ENCODE measurements at regions of chr1 and their contacts with region 1.

Region 1: DNA sequence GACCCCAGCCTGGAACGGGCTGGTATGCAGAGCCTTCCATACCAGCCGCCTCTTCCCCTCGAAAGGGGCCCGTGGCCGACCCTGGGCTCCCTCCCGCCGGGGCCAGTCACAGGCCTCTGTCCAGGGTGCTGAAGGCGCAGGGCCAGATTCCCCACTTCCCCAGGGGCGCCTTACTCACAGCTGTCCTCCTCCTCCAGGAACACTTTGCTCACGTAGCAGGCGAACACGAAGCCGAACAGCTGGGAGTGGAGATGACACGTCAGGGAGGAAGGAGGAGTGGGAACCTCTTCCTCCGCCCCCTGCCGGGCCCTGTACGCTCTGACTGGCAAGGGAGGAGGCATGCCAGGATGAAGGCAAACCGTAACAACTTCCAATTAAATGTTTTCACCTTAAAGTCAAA is 57.3 kb downstream of the NKAIN1 start:
- DNase-seq: peak; percentile 54
- ATAC-seq: peak; percentile 69
- H3K4me3 Mint-ChIP-seq: no peak overlapping the region
- H3K27ac Mint-ChIP-seq: no peak overlapping the region
- H3K4me1 Mint-ChIP-seq: peaks cover 7% of the 10 kb centered on the region
- H3K27me3 Mint-ChIP-seq: peaks cover 30% of the 10 kb centered on the region
- CTCF ChIP-seq: no peak

Region 2: GRCh38 chr1:30868833-30869435 is 313.4 kb before region 1 on chr1:
- CTCF ChIA-PET with region 1: no interaction called
- POLR2A ChIA-PET with region 1: no interaction called
- intact Hi-C with region 1: no loop called
- DNase-seq: peak; percentile 40
- ATAC-seq: no peak
- H3K4me3 Mint-ChIP-seq: no peak overlapping the region
- H3K27ac Mint-ChIP-seq: no peak overlapping the region
- H3K4me1 Mint-ChIP-seq: peaks cover 3% of the 10 kb centered on the region
- H3K27me3 Mint-ChIP-seq: peaks cover 8% of the 10 kb centered on the region
- CTCF ChIP-seq: no peak

Region 3: GRCh38 chr1:31170486-31170735 is 11.9 kb before region 1 on chr1:
- CTCF ChIA-PET with region 1: interaction called, 15 read pairs
- POLR2A ChIA-PET with region 1: no interaction called
- intact Hi-C with region 1: no loop called
- DNase-seq: no peak
- ATAC-seq: no peak
- H3K4me3 Mint-ChIP-seq: no peak overlapping the region
- H3K27ac Mint-ChIP-seq: peak overlapping the region; percentile 72
- H3K4me1 Mint-ChIP-seq: peaks cover 8% of the 10 kb centered on the region
- H3K27me3 Mint-ChIP-seq: no peaks in the 10 kb centered on the region
- CTCF ChIP-seq: no peak

Region 4: DNA sequence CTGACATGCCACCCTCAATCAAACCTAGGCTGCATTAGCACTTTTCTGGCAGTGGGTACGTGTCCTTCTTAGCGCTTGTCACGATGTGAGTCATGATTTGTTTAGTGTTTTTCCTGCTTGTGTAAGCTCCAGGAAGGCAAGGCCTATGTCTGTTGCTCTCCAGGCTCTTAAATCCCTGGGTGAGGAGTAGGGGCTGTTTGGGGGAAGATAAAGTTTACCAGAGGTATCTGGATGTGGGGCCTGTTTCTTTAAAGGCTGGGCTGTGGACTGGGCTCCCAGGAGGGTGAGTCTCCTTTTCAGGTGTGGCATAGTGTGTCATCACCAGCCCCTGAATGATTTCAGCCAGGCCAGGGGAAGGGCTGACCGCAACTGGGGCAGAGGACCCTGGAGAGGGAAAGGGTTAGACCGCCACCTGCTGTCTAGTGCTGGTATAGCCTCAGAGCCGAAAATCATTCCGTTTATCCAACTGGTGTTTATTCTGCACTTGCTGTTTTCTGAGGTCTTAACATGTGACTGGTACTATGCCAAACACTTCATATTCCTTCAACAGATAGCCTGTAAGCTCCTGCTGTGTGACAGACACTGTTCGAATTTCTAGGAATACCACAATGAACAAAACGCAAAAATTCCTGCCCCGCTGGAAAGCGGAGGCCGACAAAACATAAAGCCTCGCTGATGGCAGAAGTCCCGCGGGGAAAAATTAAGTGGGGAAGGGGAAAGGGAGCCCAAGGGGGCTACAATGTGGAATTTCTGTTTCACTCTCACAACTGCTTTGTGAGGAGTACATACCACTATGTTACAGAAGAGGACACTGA is 240.4 kb after region 1 on chr1:
- CTCF ChIA-PET with region 1: interaction called, 9 read pairs
- POLR2A ChIA-PET with region 1: no interaction called
- intact Hi-C with region 1: loop called (anchors 10 kb)
- DNase-seq: peak; percentile 82
- ATAC-seq: peak; percentile 91
- H3K4me3 Mint-ChIP-seq: no peak overlapping the region
- H3K27ac Mint-ChIP-seq: no peak overlapping the region
- H3K4me1 Mint-ChIP-seq: no peaks in the 10 kb centered on the region
- H3K27me3 Mint-ChIP-seq: peaks cover 13% of the 10 kb centered on the region
- CTCF ChIP-seq: peak; percentile 98

Measured in activated CD8-positive, alpha-beta T cell treated with anti-CD3 and anti-CD28 coated beads for 36 hours (primary cell).